ENCODE measurements at regions of chr2 and their contacts with region 1.

Region 1: GRCh38 chr2:151619337-151619989 is 114.8 kb downstream of the NEB start:
- DNase-seq: peak in 3 of 4 experiments; percentile 21 to 65 (median 35)
- ATAC-seq: peak; percentile 98
- H3K4me3 ChIP-seq: no peak overlapping the region
- H3K27ac ChIP-seq: peak overlapping the region; percentile 26; the same call in 2 of the 3 replicates
- H3K4me1 ChIP-seq: peaks cover 0 to 18% of the 10 kb centered on the region in 2 experiments; a peak in 2 of 5 replicates
- H3K27me3 ChIP-seq: no peaks in the 10 kb centered on the region
- CTCF ChIP-seq: peak; percentile 28 to 54 (median 47); a peak in 5 of 6 replicates
- EP300 ChIP-seq: no peak
- POLR2A ChIP-seq: no peak
- RAD21 ChIP-seq: peak; percentile 30 to 63; a peak in 3 of 4 replicates

Region 2: DNA sequence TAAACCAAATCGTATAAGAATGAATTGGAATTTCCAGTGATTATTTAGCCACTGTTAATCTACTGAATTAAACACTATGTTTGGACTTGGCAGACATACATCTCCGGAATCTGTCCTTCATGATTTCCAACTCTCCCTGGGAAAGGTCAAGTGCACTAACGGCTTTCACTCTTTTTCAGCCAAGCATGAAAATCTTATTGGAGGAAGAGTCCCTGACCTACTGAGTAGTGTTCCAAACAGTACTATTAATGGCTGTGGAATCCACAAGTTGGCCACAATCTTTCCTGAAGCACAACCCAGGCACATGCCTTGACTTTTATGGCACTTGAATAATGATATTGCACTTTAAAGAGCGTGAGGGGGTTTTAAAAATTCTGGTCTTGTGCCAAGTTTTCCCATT is 813.1 kb before region 1 on chr2:
- CTCF ChIA-PET with region 1: no interaction called
- POLR2A ChIA-PET with region 1: no interaction called
- in situ Hi-C with region 1: no loop called
- intact Hi-C with region 1: no loop called
- DNase-seq: no peak
- ATAC-seq: no peak
- H3K4me3 ChIP-seq: no peak overlapping the region
- H3K27ac ChIP-seq: no peak overlapping the region
- H3K4me1 ChIP-seq: no peaks in the 10 kb centered on the region
- H3K27me3 ChIP-seq: no peaks in the 10 kb centered on the region
- CTCF ChIP-seq: no peak
- EP300 ChIP-seq: no peak
- POLR2A ChIP-seq: no peak
- RAD21 ChIP-seq: no peak

Region 3: DNA sequence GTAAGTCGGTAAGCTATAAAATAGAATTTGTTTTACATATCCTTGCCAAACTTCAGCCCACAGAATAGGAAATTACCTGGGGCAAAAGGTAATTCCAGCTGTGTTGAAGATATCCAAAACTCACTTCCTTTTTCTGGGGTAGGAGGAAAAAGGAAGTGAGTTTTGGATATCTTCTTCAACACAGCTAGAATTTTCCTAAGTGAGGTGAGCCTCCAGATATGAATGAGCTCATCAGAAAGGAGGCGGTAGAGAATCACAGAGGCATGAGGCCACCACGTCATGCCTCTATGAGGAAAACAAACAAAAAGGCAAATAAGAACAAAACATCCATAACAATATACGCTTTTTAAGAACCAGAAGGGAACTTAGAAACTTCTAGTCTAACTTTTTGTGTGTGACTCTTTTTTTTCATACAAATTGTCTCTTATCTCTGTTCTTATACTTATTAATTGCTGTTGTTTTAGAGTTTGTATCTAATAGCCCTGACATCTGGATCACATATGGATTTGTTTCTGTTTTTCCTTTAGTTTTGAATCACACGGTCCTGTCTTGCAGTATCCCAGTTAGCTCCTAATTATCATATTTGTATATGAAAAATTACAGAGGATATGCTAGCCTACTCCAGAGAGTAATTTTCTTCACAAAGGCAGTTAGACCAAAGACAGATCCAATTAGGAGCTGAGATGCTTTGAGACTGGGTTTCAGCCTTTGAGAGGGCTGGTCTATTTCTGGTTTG is 462.3 kb before region 1 on chr2:
- CTCF ChIA-PET with region 1: no interaction called
- POLR2A ChIA-PET with region 1: no interaction called
- in situ Hi-C with region 1: no loop called
- intact Hi-C with region 1: no loop called
- DNase-seq: no peak
- ATAC-seq: no peak
- H3K4me3 ChIP-seq: no peak overlapping the region
- H3K27ac ChIP-seq: no peak overlapping the region
- H3K4me1 ChIP-seq: no peaks in the 10 kb centered on the region
- H3K27me3 ChIP-seq: no peaks in the 10 kb centered on the region
- CTCF ChIP-seq: no peak; a peak in 1 of 6 replicates
- EP300 ChIP-seq: no peak
- POLR2A ChIP-seq: no peak
- RAD21 ChIP-seq: no peak

Region 4: GRCh38 chr2:152012697-152013096 is 393.2 kb after region 1 on chr2:
- CTCF ChIA-PET with region 1: no interaction called
- POLR2A ChIA-PET with region 1: no interaction called
- in situ Hi-C with region 1: loop called (anchors 25 kb)
- intact Hi-C with region 1: no loop called
- DNase-seq: no peak
- ATAC-seq: no peak
- H3K4me3 ChIP-seq: no peak overlapping the region
- H3K27ac ChIP-seq: no peak overlapping the region
- H3K4me1 ChIP-seq: no peaks in the 10 kb centered on the region
- H3K27me3 ChIP-seq: peaks cover 21 to 33% of the 10 kb centered on the region in 2 experiments
- CTCF ChIP-seq: no peak
- EP300 ChIP-seq: no peak
- POLR2A ChIP-seq: no peak
- RAD21 ChIP-seq: no peak

Region 5: GRCh38 chr2:152025678-152026287 is 406.3 kb after region 1 on chr2:
- CTCF ChIA-PET with region 1: interaction called, 21 read pairs
- POLR2A ChIA-PET with region 1: no interaction called
- in situ Hi-C with region 1: loop called (anchors 25 kb)
- intact Hi-C with region 1: loop called (anchors 1 kb)
- DNase-seq: peak; percentile 70 to 90 (median 78)
- ATAC-seq: peak; percentile 99
- H3K4me3 ChIP-seq: no peak overlapping the region
- H3K27ac ChIP-seq: no peak overlapping the region
- H3K4me1 ChIP-seq: no peaks in the 10 kb centered on the region
- H3K27me3 ChIP-seq: peaks cover 0 to 7% of the 10 kb centered on the region in 2 experiments; a peak in 2 of 5 replicates
- CTCF ChIP-seq: peak; percentile 86 to 100 (median 98)
- EP300 ChIP-seq: no peak
- POLR2A ChIP-seq: no peak
- RAD21 ChIP-seq: peak; percentile 94 to 99